Endothelial cell of umbilical vein (primary cell): ENCODE measurements at regions of chr21 and their contacts with region 1.

Region 1: DNA sequence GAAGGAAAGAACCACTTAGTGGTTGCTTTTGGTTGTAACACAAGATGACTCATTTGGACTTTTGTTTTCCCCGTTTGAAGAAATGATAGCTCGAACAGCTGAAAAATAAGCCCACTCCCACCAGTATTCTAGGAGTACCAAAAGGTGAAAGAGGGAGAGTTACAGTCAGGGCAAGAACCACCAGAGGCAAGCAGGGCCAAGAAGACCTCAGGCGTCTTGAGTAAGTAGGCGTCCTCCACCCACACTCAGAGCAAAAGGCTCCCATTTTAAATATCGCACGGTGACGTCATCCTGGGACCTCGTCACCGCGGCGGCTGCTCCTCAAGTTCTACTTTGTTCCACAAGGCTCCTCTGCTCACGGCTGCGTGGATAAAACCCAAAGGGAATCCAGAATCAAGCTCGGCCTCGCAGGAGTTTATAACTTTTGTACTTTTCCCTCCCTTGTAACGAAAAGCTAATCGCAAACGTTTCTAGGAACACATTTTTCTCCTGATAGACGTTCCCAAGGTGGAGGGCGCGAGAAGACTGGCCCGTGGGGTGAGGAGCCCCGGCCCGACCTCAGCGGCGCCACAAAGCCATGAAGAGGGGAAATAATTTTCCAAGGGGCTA is 1.2 kb downstream of the BTG3 start:
- DNase-seq: peak; percentile 93
- H3K4me3 ChIP-seq: peak overlapping the region; percentile 76 to 94 (median 93)
- H3K27ac ChIP-seq: peak overlapping the region; percentile 97
- H3K4me1 ChIP-seq: peaks cover 10% of the 10 kb centered on the region
- H3K27me3 ChIP-seq: peaks cover 0 to 2% of the 10 kb centered on the region in 2 experiments
- CTCF ChIP-seq: no peak
- POLR2A ChIP-seq: peak; percentile 27

Region 2: GRCh38 chr21:15659753-15660422 is 1951.6 kb before region 1 on chr21:
- CTCF ChIA-PET with region 1: no interaction called
- POLR2A ChIA-PET with region 1: no interaction called
- dilution Hi-C with region 1: no loop called
- intact Hi-C with region 1: loop called (anchors 5 kb)
- DNase-seq: no peak
- H3K4me3 ChIP-seq: no peak overlapping the region
- H3K27ac ChIP-seq: no peak overlapping the region
- H3K4me1 ChIP-seq: no peaks in the 10 kb centered on the region
- H3K27me3 ChIP-seq: no peaks in the 10 kb centered on the region
- CTCF ChIP-seq: no peak
- POLR2A ChIP-seq: no peak

Region 3: GRCh38 chr21:17454315-17455027 is 157.0 kb before region 1 on chr21:
- CTCF ChIA-PET with region 1: no interaction called
- POLR2A ChIA-PET with region 1: no interaction called
- dilution Hi-C with region 1: no loop called
- intact Hi-C with region 1: loop called (anchors 2 kb)
- DNase-seq: peak; percentile 73
- H3K4me3 ChIP-seq: no peak overlapping the region
- H3K27ac ChIP-seq: peak overlapping the region; percentile 43
- H3K4me1 ChIP-seq: peaks cover 15% of the 10 kb centered on the region
- H3K27me3 ChIP-seq: no peaks in the 10 kb centered on the region
- CTCF ChIP-seq: no peak
- POLR2A ChIP-seq: no peak

Region 4: DNA sequence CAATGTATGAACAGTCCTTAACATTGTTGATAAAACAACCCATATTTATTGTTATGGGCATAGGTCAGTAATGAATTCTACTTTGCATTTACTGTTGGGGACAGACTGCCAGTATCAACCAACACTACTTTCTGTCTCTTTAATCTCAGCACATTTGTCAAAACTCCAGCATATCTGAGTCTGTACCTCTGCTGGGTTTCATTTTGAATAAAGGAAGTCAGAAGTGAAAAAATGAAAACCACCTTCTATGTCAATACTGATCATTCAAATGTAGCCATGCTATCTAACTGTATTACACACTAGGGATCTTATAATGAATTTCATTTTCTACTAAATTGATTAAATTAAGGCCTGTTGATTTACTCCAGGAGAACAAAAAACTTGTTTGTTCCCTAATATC is 122.9 kb before region 1 on chr21:
- CTCF ChIA-PET with region 1: no interaction called
- POLR2A ChIA-PET with region 1: no interaction called
- dilution Hi-C with region 1: no loop called
- intact Hi-C with region 1: no loop called
- DNase-seq: no peak
- H3K4me3 ChIP-seq: no peak overlapping the region
- H3K27ac ChIP-seq: no peak overlapping the region
- H3K4me1 ChIP-seq: peaks cover 47% of the 10 kb centered on the region
- H3K27me3 ChIP-seq: no peaks in the 10 kb centered on the region
- CTCF ChIP-seq: no peak
- POLR2A ChIP-seq: no peak

Region 5: DNA sequence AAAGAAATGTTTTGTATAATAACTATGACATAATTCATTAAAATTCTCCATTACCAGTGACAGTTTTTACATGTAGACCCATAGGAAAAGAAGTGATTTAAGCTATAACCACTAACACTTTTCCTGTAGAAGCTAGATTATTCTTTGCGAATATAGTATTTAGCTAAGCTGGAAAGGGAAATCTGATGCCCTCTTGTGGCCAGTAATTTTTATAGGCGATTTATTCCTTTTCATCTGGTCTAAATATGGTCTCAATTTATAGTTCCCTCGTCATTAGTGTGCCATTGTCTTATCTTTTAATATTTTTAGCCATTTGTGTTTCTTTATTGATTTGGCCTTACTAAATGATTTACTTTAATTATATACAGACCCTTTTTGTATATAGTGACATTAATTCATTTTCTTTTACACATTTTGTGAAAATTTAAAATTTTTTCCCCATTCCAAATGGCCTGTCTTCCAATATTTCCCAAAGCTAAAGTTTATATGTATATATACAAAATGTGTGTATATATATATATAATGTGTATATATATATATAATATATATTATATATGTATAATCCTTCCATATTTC is 25.6 kb before region 1 on chr21:
- CTCF ChIA-PET with region 1: interaction called, 14 read pairs
- POLR2A ChIA-PET with region 1: no interaction called
- dilution Hi-C with region 1: no loop called
- intact Hi-C with region 1: no loop called
- DNase-seq: peak; percentile 56
- H3K4me3 ChIP-seq: no peak overlapping the region
- H3K27ac ChIP-seq: no peak overlapping the region
- H3K4me1 ChIP-seq: no peaks in the 10 kb centered on the region
- H3K27me3 ChIP-seq: peaks cover 0 to 2% of the 10 kb centered on the region in 2 experiments
- CTCF ChIP-seq: peak; percentile 37 to 51
- POLR2A ChIP-seq: no peak

Region 6: GRCh38 chr21:17819114-17819876 is 207.8 kb after region 1 on chr21 and contains the start of gene C21orf91:
- CTCF ChIA-PET with region 1: no interaction called
- POLR2A ChIA-PET with region 1: no interaction called
- dilution Hi-C with region 1: no loop called
- intact Hi-C with region 1: loop called (anchors 2 kb)
- DNase-seq: peak; percentile 86
- H3K4me3 ChIP-seq: peak within 1 kb of the TSS; percentile 56 to 82 (median 72)
- H3K27ac ChIP-seq: peak within 1 kb of the TSS; percentile 75
- H3K4me1 ChIP-seq: peaks cover 10% of the 10 kb centered on the region
- H3K27me3 ChIP-seq: peaks cover 0 to 3% of the 10 kb centered on the region in 2 experiments
- CTCF ChIP-seq: no peak
- POLR2A ChIP-seq: peak; percentile 85
- total RNA-seq, gene C21orf91: 4.2 and 5.4 TPM in 2 replicates